GM10248 (cell line): ENCODE measurements at regions of chr20 and their contacts with region 1.

Region 1: DNA sequence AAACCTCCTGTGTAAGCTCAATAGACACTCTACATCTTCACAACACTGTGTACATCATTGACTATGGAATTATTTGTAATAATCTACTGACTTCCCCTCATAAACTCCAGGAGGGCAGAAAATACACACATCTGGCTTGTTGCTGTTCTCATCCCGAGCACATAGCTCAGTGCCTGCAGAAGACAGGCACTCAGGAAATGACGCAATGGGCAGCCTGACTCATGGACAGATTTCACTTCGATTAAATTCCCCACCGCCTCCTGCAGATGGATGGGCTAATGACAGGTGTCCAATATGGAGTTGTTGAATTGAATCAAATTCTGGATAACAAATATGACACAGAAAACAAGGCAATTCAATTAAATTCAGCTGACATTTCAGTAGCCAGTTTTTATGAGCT is 9.2 kb downstream of the ANKRD60 start:
- DNase-seq: no peak
- CTCF ChIP-seq: no peak

Region 2: DNA sequence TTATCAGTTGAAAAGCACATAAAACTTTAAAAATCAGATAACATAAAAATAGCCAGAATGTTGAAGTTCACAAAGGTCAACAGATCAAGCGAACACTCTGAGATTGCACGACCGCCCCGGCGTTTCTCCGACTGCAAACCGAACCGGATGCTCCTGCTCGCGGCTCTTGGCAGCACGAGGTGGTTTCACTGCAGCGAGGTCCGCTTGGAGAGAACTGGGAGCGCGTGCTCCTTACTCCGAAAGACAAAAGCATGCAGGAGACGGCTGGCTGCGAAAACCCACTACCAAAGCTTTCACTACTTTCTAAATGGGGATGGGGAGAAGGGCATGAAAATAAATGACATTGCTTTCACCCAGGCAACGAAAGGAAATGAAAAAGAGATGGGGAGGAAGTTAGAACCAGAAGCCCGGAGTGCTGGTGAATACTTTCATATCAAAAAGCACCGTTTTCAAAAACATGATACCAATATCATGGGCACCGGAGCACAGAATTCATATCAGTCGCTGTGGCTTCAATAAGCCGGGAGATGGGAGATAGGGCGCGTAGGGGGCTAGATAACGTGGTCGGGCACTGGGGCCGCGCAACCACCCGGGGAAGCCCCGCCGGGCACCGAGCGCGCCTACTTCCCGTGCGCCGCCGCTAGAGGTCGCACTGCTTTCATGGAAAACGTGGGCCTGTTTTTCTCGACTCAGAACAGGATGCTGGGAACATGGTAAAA is 17.5 kb after region 1 on chr20:
- CTCF ChIA-PET with region 1: interaction called, 71 read pairs
- POLR2A ChIA-PET with region 1: no interaction called
- DNase-seq: peak; percentile 85
- CTCF ChIP-seq: peak; percentile 97